ENCODE measurements at regions of chr2 and their contacts with region 1.

Region 1: GRCh38 chr2:189661148-189661956 is at the start of gene ASNSD1:
- DNase-seq: peak; percentile 99
- H3K4me3 ChIP-seq: peak within 1 kb of the TSS; percentile 100
- CTCF ChIP-seq: peak; percentile 74

Region 2: GRCh38 chr2:189648846-189649509 is 12.4 kb before region 1 on chr2:
- CTCF ChIA-PET with region 1: interaction called, 56 read pairs
- POLR2A ChIA-PET with region 1: no interaction called
- DNase-seq: peak; percentile 37
- H3K4me3 ChIP-seq: no peak overlapping the region
- CTCF ChIP-seq: no peak

Region 3: DNA sequence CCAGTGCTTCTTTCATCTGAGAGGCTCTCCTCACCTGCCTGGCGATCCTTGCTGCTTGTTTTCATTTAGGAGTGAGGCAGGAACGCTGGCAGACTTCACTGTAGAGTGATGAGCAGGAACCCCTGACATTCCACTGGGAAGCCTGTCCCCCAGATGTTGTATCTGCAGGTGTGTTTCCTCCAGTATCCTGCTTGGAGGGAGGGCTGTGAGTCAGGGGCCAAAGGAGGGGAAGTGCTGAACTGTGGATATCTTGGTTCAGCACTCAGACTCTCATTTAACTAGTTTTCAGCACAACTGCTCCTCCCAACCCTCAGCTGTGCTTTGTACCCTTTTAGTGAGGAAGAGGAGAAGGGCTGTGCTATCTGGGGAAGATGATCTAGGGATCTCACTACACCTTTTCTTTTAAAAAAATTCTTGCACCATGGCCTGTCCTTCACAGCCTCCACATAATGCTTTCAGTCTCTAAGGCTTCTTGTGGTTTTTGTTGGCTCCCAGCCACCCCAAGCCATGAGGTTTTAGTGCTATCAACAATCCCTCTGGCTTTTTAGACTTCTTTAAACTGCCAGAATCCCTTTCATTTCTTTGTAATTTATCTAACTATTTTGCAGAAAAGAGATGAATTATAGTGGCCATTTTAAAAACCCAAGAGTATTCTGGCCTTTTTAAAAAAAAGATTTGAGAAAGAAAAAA is 24.3 kb after region 1 on chr2:
- CTCF ChIA-PET with region 1: interaction called, 19 read pairs
- POLR2A ChIA-PET with region 1: interaction called, 4 read pairs
- DNase-seq: peak; percentile 14
- H3K4me3 ChIP-seq: no peak overlapping the region
- CTCF ChIP-seq: no peak

Region 4: DNA sequence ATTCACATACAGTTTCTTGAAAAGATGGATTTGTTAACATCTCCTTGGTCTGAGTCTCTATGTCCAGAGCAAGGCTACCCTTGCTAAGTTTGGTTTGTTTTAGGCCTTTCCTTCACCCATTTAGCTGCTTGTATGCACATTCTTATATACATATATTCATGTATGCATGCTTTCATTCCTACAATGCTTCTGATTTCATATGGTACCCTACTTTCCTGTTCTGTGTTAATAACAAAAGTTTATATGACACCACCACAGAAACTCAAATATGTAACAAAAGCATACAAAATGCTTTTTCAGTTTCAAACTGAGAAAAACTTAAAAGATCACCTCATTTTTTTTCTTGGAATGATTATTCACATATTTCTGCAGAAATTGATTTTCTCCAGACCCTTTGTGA is 61.8 kb after region 1 on chr2:
- CTCF ChIA-PET with region 1: interaction called, 10 read pairs
- POLR2A ChIA-PET with region 1: no interaction called
- DNase-seq: no peak
- H3K4me3 ChIP-seq: no peak overlapping the region
- CTCF ChIP-seq: no peak

Region 5: DNA sequence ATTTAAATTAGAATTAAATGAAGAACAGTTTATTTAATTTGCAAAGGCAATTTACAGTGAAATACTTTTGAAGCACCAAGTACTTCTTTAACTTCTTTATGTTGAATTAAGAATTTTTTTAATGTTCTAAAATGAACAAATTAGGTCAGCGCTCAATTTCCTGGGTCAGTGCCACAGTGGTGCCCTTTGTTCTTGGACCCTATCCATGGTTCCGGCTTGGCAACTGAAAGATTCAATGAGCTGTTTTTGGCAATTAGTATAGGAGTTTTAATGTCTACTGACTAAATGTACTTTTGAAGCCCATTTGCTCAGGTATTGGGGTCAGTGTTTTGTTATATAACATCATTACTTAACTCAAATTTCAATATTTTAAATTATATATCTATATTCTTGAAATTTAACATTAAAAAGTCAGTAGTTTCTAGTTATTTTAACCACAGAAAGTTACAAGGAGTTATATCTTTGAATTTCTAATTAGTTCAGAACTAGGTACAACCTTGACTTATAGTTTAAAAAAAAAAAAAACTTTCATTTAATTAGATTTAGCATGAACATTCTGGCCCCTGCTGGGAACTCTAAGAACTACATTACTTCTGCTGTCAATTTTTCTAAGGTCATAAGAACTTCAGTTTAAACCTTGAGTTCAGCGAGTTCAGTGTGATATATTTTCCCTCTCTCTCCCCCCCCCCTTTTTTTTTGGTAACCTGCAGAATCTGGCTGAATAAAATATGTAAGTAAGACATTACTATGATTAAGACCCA is 408.8 kb after region 1 on chr2:
- CTCF ChIA-PET with region 1: interaction called, 35 read pairs
- POLR2A ChIA-PET with region 1: no interaction called
- DNase-seq: peak; percentile 9
- H3K4me3 ChIP-seq: no peak overlapping the region
- CTCF ChIP-seq: peak; percentile 34

Measured in AG04449 (cell line).